GM12878 (cell line): ENCODE measurements at regions of chr14 and their contacts with region 1.

Region 1: GRCh38 chr14:35140718-35141581 is 18.6 kb downstream of the PRORP start:
- DNase-seq: no peak
- ATAC-seq: peak; percentile 60
- H3K4me3 ChIP-seq: no peak overlapping the region
- H3K27ac ChIP-seq: no peak overlapping the region
- H3K4me1 ChIP-seq: peaks cover 10% of the 10 kb centered on the region
- H3K27me3 ChIP-seq: no peaks in the 10 kb centered on the region
- CTCF ChIP-seq: peak in 2 of 3 experiments; percentile 11 to 23; a peak in 3 of 6 replicates
- EP300 ChIP-seq: no peak
- POLR2A ChIP-seq: no peak
- RAD21 ChIP-seq: peak; percentile 60

Region 2: GRCh38 chr14:34951271-34951670 is 189.7 kb before region 1 on chr14:
- CTCF ChIA-PET with region 1: no interaction called
- POLR2A ChIA-PET with region 1: no interaction called
- RAD21 ChIA-PET with region 1: no interaction called
- SMC1A ChIA-PET with region 1: no interaction called
- in situ Hi-C with region 1: no loop called
- intact Hi-C with region 1: no loop called
- DNase-seq: no peak
- ATAC-seq: no peak
- H3K4me3 ChIP-seq: no peak overlapping the region
- H3K27ac ChIP-seq: no peak overlapping the region
- H3K4me1 ChIP-seq: no peaks in the 10 kb centered on the region
- H3K27me3 ChIP-seq: no peaks in the 10 kb centered on the region
- CTCF ChIP-seq: no peak
- EP300 ChIP-seq: no peak
- POLR2A ChIP-seq: no peak
- RAD21 ChIP-seq: no peak

Region 3: DNA sequence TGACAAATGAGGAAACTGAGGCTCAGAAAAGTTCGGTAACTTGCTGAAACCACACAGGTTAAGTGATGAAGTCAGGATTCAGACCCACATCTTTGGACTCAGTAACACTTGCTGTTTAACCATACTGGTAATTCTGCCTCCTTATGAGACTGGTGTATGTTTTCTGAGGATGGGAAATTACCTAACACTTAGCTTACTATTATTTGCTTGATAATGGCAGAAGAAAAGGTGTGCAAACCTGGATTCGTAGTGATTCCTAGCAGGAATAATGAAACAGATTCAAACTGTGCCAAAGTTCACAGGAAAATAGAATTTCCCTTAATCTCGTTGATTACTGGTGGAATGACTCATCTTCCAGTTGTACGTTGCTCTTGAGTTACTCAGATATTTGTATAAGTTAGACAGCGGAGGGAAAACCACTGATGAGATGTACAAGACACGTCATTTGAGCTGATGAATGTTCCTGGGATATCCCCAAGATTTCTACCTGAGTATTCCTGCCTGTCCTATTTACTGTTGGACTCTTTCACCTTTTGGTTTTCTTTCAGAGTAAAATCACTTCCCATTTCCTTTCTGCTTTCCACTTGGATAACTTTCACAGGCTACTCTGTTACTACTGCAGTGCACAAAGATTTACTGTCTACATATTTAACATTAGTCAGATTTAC is 18.9 kb after region 1 on chr14:
- CTCF ChIA-PET with region 1: interaction called, 28 read pairs
- POLR2A ChIA-PET with region 1: interaction called, 9 read pairs
- RAD21 ChIA-PET with region 1: interaction called, 10 read pairs
- SMC1A ChIA-PET with region 1: interaction called, 41 read pairs
- in situ Hi-C with region 1: no loop called
- intact Hi-C with region 1: no loop called
- DNase-seq: no peak
- ATAC-seq: peak; percentile 64
- H3K4me3 ChIP-seq: no peak overlapping the region
- H3K27ac ChIP-seq: peak overlapping the region; percentile 45; the same call in 1 of the 2 replicates
- H3K4me1 ChIP-seq: peaks cover 19% of the 10 kb centered on the region
- H3K27me3 ChIP-seq: no peaks in the 10 kb centered on the region
- CTCF ChIP-seq: no peak
- EP300 ChIP-seq: peak in 1 of 2 experiments; percentile 14; a peak in 1 of 4 replicates
- POLR2A ChIP-seq: no peak
- RAD21 ChIP-seq: no peak

Region 4: DNA sequence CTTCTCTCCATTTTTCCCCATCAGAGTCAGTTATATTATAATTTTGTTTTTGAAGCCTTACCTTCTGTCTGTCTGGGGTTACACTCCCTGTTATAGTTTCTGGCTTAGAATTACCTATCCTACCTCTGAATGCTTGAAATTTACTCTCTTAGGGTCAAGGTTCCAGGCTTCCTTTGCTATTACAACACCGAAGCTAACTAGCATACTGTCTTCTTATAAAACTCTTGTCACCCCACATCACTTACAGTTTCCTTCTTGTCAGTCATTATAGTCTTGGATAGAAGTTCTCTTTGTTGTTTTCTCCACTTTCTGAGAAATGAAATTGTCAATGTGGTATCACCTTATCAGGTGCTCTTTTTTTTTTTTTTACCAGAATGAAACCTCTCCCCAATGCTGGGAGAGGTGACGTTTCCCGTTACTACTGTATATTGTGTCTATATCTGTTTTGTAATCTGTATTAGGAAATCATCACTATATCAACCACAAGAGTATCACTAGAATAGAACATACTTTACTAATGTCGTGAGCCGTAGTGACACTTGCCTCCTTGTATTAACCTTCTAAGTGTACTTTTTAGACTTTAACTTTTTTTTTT is 82.0 kb after region 1 on chr14:
- CTCF ChIA-PET with region 1: interaction called, 141 read pairs
- POLR2A ChIA-PET with region 1: no interaction called
- RAD21 ChIA-PET with region 1: interaction called, 43 read pairs
- SMC1A ChIA-PET with region 1: interaction called, 54 read pairs
- in situ Hi-C with region 1: no loop called
- intact Hi-C with region 1: loop called (anchors 5 kb)
- DNase-seq: no peak
- ATAC-seq: no peak
- H3K4me3 ChIP-seq: no peak overlapping the region
- H3K27ac ChIP-seq: no peak overlapping the region
- H3K4me1 ChIP-seq: no peaks in the 10 kb centered on the region
- H3K27me3 ChIP-seq: no peaks in the 10 kb centered on the region
- CTCF ChIP-seq: no peak
- EP300 ChIP-seq: no peak
- POLR2A ChIP-seq: no peak
- RAD21 ChIP-seq: no peak

Region 5: DNA sequence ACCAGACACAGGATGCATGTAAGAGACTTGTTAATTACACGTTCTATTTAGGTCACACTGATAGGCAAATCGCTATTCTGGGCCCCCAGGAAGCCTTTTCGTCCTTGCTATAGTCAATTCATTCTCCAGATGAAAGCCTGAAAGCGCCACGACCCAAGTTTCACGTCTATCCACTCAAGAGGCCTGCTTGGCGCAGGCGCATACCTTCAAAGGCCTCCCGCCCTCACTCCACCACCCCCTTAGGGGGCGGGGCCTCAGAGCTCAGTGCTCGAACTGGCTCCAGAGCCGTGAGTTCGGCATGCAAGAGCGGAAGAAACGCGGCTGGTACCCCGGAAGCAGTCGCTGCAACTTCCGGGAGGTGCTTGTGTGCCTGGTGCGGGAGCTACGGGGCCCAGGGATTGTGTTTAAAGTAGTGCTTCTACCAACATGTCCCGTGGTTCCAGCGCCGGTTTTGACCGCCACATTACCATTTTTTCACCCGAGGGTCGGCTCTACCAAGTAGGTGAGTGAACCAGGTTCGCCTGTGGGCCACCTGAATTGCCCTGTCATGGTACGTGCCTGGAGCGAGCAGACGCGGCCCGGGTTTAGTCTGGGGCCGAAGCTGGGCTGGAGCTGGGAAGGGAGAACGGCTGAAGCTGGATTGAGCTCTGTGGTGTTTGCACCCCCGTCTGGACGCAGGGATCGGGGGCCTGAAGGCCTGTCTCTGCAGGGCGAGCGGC is 151.3 kb after region 1 on chr14 and contains the start of gene PSMA6:
- CTCF ChIA-PET with region 1: interaction called, 10 read pairs
- POLR2A ChIA-PET with region 1: no interaction called
- RAD21 ChIA-PET with region 1: interaction called, 11 read pairs
- SMC1A ChIA-PET with region 1: interaction called, 27 read pairs
- in situ Hi-C with region 1: no loop called
- intact Hi-C with region 1: loop called (anchors 5 kb)
- DNase-seq: peak; percentile 98
- ATAC-seq: peak; percentile 90
- H3K4me3 ChIP-seq: peak within 1 kb of the TSS; percentile 86
- H3K27ac ChIP-seq: peak within 1 kb of the TSS; percentile 80
- H3K4me1 ChIP-seq: peaks cover 18% of the 10 kb centered on the region
- H3K27me3 ChIP-seq: no peaks in the 10 kb centered on the region
- CTCF ChIP-seq: no peak
- EP300 ChIP-seq: 0 out of 4 replicates have a peak, but pooled peaks have one; percentile 20 to 36
- POLR2A ChIP-seq: peak; percentile 83
- RAD21 ChIP-seq: no peak
- polyA plus RNA-seq, gene PSMA6: 1,136 to 1,363 TPM